CD4-positive, alpha-beta T cell (primary cell): ENCODE measurements at regions of chr3 and their contacts with region 1.

Region 1: GRCh38 chr3:48400824-48401433 is 28.9 kb downstream of the FBXW12 start:
- DNase-seq: peak; percentile 45 to 88 (median 56)
- ATAC-seq: peak; percentile 82
- H3K4me3 ChIP-seq: no peak overlapping the region
- H3K4me3 Mint-ChIP-seq: no peak overlapping the region
- H3K27ac ChIP-seq: no peak overlapping the region
- H3K27ac Mint-ChIP-seq: no peak overlapping the region
- H3K4me1 ChIP-seq: no peaks in the 10 kb centered on the region
- H3K4me1 Mint-ChIP-seq: no peaks in the 10 kb centered on the region
- H3K27me3 ChIP-seq: no peaks in the 10 kb centered on the region
- H3K27me3 Mint-ChIP-seq: peaks cover 1% of the 10 kb centered on the region
- CTCF ChIP-seq: peak; percentile 93

Region 2: DNA sequence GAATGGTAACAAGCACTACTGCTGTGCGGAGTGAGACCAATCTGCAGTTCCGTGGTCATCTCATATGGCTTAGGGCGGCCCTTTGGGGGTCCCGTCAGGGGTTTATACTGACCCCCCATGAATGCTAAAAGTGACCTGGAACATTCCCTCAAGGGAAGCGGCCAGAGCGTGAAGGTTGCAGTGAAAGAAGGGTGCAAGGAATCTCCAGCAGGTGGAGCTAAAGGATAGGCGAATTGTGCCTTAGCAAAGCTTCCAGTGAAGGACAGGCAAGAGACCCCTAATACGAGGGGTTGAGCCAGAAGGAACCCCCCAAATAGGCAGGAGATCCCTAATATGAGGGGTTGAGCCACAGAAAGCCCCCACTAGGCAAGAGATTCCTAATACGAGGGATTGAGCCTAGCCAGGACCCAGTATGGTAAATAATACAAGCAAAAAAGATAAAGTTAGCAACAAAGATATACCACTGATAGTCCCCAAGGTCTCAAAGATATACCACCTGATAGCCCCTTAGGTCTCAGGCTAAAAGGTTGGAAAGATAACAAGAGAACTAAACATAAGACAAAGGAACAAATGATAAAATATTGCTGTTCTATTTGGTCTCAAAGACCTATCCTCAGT is 127.2 kb before region 1 on chr3:
- CTCF ChIA-PET with region 1: interaction called, 7 read pairs
- POLR2A ChIA-PET with region 1: no interaction called
- intact Hi-C with region 1: loop called in 1 of 2 experiments (anchors 1 kb)
- DNase-seq: peak; percentile 23 to 82 (median 42)
- ATAC-seq: peak; percentile 35
- H3K4me3 ChIP-seq: no peak overlapping the region
- H3K4me3 Mint-ChIP-seq: no peak overlapping the region
- H3K27ac ChIP-seq: no peak overlapping the region
- H3K27ac Mint-ChIP-seq: no peak overlapping the region
- H3K4me1 ChIP-seq: peaks cover 21% of the 10 kb centered on the region
- H3K4me1 Mint-ChIP-seq: peaks cover 24% of the 10 kb centered on the region
- H3K27me3 ChIP-seq: no peaks in the 10 kb centered on the region
- H3K27me3 Mint-ChIP-seq: no peaks in the 10 kb centered on the region
- CTCF ChIP-seq: peak; percentile 73